CD4-positive, alpha-beta memory T cell (primary cell): ENCODE measurements at regions of chr7 and their contacts with region 1.

Region 1: GRCh38 chr7:104883718-104884452 is 130.1 kb upstream of the KMT2E start:
- DNase-seq: peak; percentile 56 to 69 (median 60)
- H3K4me3 ChIP-seq: no peak overlapping the region
- H3K4me3 Mint-ChIP-seq: peak overlapping the region in 1 of 8 donors; percentile 35
- H3K27ac ChIP-seq: no peak overlapping the region
- H3K27ac Mint-ChIP-seq: peak overlapping the region in 3 of 7 donors; percentile 5 to 72 (median 23)
- H3K4me1 ChIP-seq: peaks cover 3% of the 10 kb centered on the region
- H3K4me1 Mint-ChIP-seq: peaks cover 0 to 10% (median 7%) of the 10 kb centered on the region in 4 donors
- H3K27me3 ChIP-seq: no peaks in the 10 kb centered on the region
- H3K27me3 Mint-ChIP-seq: peaks cover 0 to 3% of the 10 kb centered on the region in 2 donors

Region 2: DNA sequence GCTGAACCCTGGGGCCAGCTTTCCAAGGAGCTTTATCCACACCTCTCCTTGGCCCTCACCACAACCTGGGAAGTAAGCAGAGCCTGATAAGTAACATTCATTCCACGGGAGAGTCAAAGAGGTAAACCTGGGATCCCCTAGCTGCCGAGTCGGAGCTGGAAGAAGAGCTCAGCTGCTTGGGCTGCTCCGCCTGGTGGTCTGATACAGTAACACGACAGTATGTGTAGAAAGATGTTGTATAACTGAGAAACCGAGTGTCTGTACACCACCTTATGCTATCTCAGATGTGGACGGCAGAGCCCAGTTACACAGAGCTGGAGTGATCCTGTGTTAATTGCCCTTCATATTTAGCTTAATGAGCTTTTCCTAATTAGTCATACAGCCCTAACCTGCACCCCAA is 21.2 kb before region 1 on chr7:
- CTCF ChIA-PET with region 1: interaction called, 11 read pairs
- POLR2A ChIA-PET with region 1: no interaction called
- intact Hi-C with region 1: no loop called
- DNase-seq: no peak
- H3K4me3 ChIP-seq: no peak overlapping the region
- H3K4me3 Mint-ChIP-seq: no peak overlapping the region
- H3K27ac ChIP-seq: no peak overlapping the region
- H3K27ac Mint-ChIP-seq: no peak overlapping the region
- H3K4me1 ChIP-seq: peaks cover 9% of the 10 kb centered on the region
- H3K4me1 Mint-ChIP-seq: peaks cover 9 to 11% (median 10%) of the 10 kb centered on the region in 4 donors
- H3K27me3 ChIP-seq: no peaks in the 10 kb centered on the region
- H3K27me3 Mint-ChIP-seq: peaks cover 9 to 10% of the 10 kb centered on the region in 2 donors

Region 3: GRCh38 chr7:104873346-104873849 is 10.5 kb before region 1 on chr7:
- CTCF ChIA-PET with region 1: interaction called, 19 read pairs
- POLR2A ChIA-PET with region 1: no interaction called
- intact Hi-C with region 1: no loop called
- DNase-seq: no peak
- H3K4me3 ChIP-seq: no peak overlapping the region
- H3K4me3 Mint-ChIP-seq: no peak overlapping the region
- H3K27ac ChIP-seq: no peak overlapping the region
- H3K27ac Mint-ChIP-seq: no peak overlapping the region
- H3K4me1 ChIP-seq: peaks cover 3% of the 10 kb centered on the region
- H3K4me1 Mint-ChIP-seq: peaks cover 2 to 9% (median 6%) of the 10 kb centered on the region in 4 donors
- H3K27me3 ChIP-seq: no peaks in the 10 kb centered on the region
- H3K27me3 Mint-ChIP-seq: no peaks in the 10 kb centered on the region

Region 4: GRCh38 chr7:104895522-104896236 is 11.8 kb after region 1 on chr7:
- CTCF ChIA-PET with region 1: interaction called, 83 read pairs
- POLR2A ChIA-PET with region 1: interaction called, 3 read pairs
- intact Hi-C with region 1: no loop called
- DNase-seq: no peak
- H3K4me3 ChIP-seq: no peak overlapping the region
- H3K4me3 Mint-ChIP-seq: no peak overlapping the region
- H3K27ac ChIP-seq: no peak overlapping the region
- H3K27ac Mint-ChIP-seq: no peak overlapping the region
- H3K4me1 ChIP-seq: no peaks in the 10 kb centered on the region
- H3K4me1 Mint-ChIP-seq: peaks cover 0 to 4% (median under 1%) of the 10 kb centered on the region in 4 donors
- H3K27me3 ChIP-seq: no peaks in the 10 kb centered on the region
- H3K27me3 Mint-ChIP-seq: no peaks in the 10 kb centered on the region

Region 5: DNA sequence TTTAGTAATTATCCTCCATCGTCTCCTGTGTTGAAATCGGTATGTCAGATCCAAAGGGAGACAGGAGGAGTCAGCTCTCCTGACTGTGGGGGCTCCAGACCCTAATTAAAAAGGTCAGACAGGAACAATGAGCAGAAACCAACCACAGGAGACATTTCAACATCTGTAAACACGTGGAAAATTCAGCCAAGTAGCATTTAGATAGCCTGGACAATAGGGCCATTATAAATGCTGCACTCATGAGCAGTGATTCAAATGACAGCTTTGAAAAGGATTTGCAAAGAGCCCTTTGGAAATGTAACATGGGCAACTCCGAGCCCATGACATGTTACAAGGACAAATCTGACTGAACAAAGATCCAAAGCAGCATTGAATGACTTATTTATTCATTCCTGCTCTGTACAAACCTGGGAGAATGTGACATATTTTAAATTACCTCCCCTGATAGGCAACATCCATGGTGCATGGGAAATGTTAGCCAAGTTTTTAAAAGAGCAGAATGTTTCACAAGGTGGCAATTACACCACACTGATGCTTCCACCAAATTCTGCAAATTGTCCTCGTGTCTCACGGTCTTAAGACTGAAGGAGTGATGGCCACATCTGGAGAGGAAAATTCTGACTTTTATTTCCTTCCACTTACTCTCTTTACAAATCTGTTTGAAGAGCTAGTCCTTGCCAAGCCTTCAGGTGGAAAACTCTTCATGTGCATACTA is 16.8 kb after region 1 on chr7:
- CTCF ChIA-PET with region 1: interaction called, 83 read pairs
- POLR2A ChIA-PET with region 1: no interaction called
- intact Hi-C with region 1: no loop called
- DNase-seq: no peak
- H3K4me3 ChIP-seq: no peak overlapping the region
- H3K4me3 Mint-ChIP-seq: no peak overlapping the region
- H3K27ac ChIP-seq: no peak overlapping the region
- H3K27ac Mint-ChIP-seq: no peak overlapping the region
- H3K4me1 ChIP-seq: no peaks in the 10 kb centered on the region
- H3K4me1 Mint-ChIP-seq: peaks cover 0 to 4% (median under 1%) of the 10 kb centered on the region in 4 donors
- H3K27me3 ChIP-seq: no peaks in the 10 kb centered on the region
- H3K27me3 Mint-ChIP-seq: no peaks in the 10 kb centered on the region

Region 6: DNA sequence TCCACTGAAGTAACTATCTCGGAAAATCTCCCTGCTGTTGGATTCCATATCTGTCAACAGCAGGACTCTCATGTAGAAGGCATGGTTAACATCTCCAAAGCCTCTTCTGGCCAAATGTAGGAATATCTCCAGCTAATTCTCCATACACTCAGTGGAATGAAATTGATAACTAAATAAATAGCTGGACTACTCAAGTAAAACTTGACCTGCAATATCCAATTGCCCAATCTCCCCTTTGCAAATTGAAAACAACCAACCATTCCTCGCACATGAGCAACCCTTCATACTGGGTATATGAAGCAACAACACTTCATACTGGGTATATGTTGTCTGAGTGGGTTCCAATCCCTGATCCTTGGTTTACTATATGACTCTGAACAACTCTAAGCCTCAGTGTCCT is 24.8 kb after region 1 on chr7:
- CTCF ChIA-PET with region 1: interaction called, 339 read pairs
- POLR2A ChIA-PET with region 1: interaction called, 3 read pairs
- intact Hi-C with region 1: no loop called
- DNase-seq: no peak
- H3K4me3 ChIP-seq: no peak overlapping the region
- H3K4me3 Mint-ChIP-seq: no peak overlapping the region
- H3K27ac ChIP-seq: no peak overlapping the region
- H3K27ac Mint-ChIP-seq: no peak overlapping the region
- H3K4me1 ChIP-seq: no peaks in the 10 kb centered on the region
- H3K4me1 Mint-ChIP-seq: peaks cover 0 to 4% (median 0%) of the 10 kb centered on the region in 4 donors
- H3K27me3 ChIP-seq: peaks cover 4% of the 10 kb centered on the region
- H3K27me3 Mint-ChIP-seq: peaks cover 6% of the 10 kb centered on the region in 2 donors

Region 7: DNA sequence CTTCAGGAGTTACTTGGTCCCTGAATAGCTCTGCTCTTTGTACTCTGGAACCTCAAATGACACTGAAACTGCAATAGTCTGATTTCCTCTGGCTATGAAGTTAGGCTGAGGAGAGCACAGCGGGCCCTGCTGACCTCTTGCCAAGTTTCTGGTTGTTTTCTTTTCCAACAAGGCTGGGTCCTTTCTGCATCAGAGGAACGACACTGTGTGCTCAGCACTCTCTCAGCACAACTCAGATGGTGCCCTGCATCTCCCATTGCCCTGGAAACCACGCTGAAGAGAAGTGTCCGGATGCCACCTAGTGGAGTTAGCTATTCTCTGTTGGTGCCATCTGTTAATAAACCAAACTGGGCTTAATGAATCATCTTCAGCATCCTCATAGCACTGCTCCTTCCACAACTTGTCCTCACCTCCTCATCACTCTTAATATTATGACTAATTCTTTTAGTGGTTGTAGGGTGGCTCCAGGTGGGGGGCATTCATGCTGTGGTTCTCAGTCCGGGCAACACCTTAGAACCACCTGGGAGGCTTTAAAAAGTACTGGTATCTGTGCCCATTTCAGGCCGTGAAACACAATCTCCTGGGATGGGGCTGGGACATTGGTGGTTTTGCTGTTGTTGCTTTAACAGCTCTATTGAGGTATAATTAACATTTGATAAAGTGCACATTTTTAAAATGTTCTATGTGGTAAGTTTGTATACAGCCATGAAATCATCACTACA is 705.6 kb after region 1 on chr7:
- CTCF ChIA-PET with region 1: interaction called, 9 read pairs
- POLR2A ChIA-PET with region 1: no interaction called
- intact Hi-C with region 1: loop called (anchors 2 kb)
- DNase-seq: peak; percentile 47 to 59 (median 53)
- H3K4me3 ChIP-seq: no peak overlapping the region
- H3K4me3 Mint-ChIP-seq: peak overlapping the region in 1 of 8 donors; percentile 42
- H3K27ac ChIP-seq: no peak overlapping the region
- H3K27ac Mint-ChIP-seq: peak overlapping the region in 4 of 7 donors; percentile 14 to 78 (median 54)
- H3K4me1 ChIP-seq: peaks cover 4% of the 10 kb centered on the region
- H3K4me1 Mint-ChIP-seq: peaks cover 4 to 6% (median 5%) of the 10 kb centered on the region in 4 donors
- H3K27me3 ChIP-seq: no peaks in the 10 kb centered on the region
- H3K27me3 Mint-ChIP-seq: no peaks in the 10 kb centered on the region